ENCODE measurements at regions of chr11 and their contacts with region 1.

Region 1: GRCh38 chr11:107849790-107850189 is 8.8 kb downstream of the SLC35F2 start:
- DNase-seq: no peak

Region 2: GRCh38 chr11:106961518-106961917 is 888.3 kb before region 1 on chr11:
- intact Hi-C with region 1: loop called in 1 of 2 experiments (anchors 5 kb)
- DNase-seq: no peak

Region 3: GRCh38 chr11:107916671-107917241 is 67.0 kb after region 1 on chr11:
- intact Hi-C with region 1: no loop called
- DNase-seq: no peak